Activated CD4-positive, alpha-beta T cell treated with anti-CD3 and anti-CD28 coated beads, Interleukin-2, amount 10 ng/mL, durations not matched to agents 24 days and 14 days (primary cell): ENCODE measurements at regions of chr16 and their contacts with region 1.

Region 1: DNA sequence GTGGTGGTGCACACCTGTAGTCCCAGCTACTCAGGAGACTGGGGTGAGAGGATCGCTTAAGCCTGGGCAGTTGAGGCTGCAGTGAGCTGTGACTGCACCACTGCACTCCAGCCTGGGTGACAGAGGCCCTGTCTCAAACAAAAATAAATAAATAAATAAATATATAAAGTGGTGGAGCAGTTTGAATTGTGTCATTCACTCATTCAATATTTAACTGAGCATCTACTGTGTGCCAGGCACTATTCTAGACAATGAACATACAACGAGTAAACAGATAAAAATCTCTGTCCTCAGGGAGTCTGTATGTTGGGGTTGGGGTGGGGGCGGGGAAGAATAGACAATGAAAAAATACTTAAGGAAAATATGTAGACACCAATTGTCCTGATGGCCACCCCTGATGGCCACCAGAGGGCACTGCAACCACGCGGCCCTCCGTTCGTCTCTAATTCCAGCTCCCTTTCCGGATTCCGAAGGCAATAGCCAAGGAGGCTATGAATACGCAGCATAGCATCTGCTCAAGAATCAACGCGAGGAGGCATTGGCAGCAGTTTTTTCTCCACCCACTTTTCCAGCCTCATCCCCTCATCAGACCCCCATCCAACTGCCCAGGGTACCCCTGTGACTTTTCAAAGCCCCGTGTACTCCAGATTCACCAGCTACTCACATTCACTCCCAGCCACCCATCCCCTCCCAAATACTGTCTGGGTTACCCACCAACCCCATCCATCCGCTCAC is 21.4 kb downstream of the QPRT start:
- DNase-seq: peak; percentile 92
- H3K4me3 Mint-ChIP-seq: peak overlapping the region; percentile 47
- H3K27ac Mint-ChIP-seq: peak overlapping the region; percentile 81
- H3K4me1 Mint-ChIP-seq: peaks cover 35% of the 10 kb centered on the region
- H3K27me3 Mint-ChIP-seq: no peaks in the 10 kb centered on the region

Region 2: DNA sequence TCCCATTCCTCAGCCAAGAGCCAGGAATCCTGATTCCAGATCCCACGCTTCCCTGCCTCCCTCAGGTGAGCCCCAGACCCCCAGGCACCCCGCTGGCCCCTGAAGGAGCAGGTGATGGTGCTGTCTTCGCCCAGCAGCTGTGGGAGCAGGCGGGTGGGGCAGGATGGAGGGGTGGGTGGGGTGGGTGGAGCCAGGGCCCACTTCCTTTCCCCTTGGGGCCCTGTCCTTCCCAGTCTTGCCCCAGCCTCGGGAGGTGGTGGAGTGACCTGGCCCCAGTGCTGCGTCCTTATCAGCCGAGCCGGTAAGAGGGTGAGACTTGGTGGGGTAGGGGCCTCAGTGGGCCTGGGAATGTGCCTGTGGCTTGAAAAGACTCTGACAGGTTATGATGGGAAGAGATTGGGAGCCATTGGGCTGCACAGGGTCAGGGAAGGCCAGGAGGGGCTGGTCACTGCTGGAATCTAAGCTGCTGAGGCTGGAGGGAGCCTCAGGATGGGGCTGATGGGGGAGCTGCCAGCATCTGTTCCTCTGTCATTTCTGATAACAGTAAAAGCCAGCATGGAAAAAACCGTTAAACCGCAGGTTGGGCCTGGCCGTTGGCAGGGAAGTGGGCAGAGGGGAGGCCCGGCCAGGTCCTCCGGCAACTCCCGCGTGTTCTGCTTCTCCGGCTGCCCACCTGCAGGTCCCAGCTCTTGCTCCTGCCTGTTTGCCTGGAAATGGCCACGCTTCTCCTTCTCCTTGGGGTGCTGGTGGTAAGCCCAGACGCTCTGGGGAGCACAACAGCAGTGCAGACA is 37.2 kb before region 1 on chr16 and contains the start of gene SPN:
- intact Hi-C with region 1: loop called (anchors 2 kb)
- DNase-seq: peak; percentile 86
- H3K4me3 Mint-ChIP-seq: peak within 1 kb of the TSS; percentile 97
- H3K27ac Mint-ChIP-seq: peak within 1 kb of the TSS; percentile 94
- H3K4me1 Mint-ChIP-seq: peaks cover 52% of the 10 kb centered on the region
- H3K27me3 Mint-ChIP-seq: no peaks in the 10 kb centered on the region
- total RNA-seq, gene SPN: 157 and 165 TPM in 2 replicates

Region 3: GRCh38 chr16:29720699-29721098 is 20.3 kb after region 1 on chr16:
- intact Hi-C with region 1: loop called (anchors 2 kb)
- DNase-seq: no peak
- H3K4me3 Mint-ChIP-seq: no peak overlapping the region
- H3K27ac Mint-ChIP-seq: no peak overlapping the region
- H3K4me1 Mint-ChIP-seq: peaks cover 17% of the 10 kb centered on the region
- H3K27me3 Mint-ChIP-seq: peaks cover 3% of the 10 kb centered on the region

Region 4: DNA sequence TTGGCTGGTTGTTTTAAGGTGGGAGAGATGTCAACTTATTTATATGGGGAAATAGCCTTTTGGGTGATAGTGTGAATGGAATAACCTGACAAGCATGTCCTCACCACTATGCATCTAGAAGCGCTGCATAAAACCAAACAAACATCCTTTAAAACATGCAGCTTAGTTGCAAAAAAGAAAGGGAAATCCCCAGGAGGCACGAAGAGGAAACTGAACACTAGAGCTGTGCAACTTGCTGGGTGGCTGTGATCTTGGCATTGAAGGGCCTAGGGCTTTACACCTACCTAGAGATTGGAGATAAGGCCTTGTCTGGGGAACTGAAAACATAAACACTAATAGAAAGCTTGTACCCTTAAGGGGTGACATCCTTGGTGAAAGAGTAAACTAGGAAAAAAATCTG is 38.1 kb after region 1 on chr16:
- intact Hi-C with region 1: loop called (anchors 2 kb)
- DNase-seq: peak; percentile 91
- H3K4me3 Mint-ChIP-seq: peak overlapping the region; percentile 42
- H3K27ac Mint-ChIP-seq: peak overlapping the region; percentile 80
- H3K4me1 Mint-ChIP-seq: peaks cover 57% of the 10 kb centered on the region
- H3K27me3 Mint-ChIP-seq: peaks cover 4% of the 10 kb centered on the region

Region 5: DNA sequence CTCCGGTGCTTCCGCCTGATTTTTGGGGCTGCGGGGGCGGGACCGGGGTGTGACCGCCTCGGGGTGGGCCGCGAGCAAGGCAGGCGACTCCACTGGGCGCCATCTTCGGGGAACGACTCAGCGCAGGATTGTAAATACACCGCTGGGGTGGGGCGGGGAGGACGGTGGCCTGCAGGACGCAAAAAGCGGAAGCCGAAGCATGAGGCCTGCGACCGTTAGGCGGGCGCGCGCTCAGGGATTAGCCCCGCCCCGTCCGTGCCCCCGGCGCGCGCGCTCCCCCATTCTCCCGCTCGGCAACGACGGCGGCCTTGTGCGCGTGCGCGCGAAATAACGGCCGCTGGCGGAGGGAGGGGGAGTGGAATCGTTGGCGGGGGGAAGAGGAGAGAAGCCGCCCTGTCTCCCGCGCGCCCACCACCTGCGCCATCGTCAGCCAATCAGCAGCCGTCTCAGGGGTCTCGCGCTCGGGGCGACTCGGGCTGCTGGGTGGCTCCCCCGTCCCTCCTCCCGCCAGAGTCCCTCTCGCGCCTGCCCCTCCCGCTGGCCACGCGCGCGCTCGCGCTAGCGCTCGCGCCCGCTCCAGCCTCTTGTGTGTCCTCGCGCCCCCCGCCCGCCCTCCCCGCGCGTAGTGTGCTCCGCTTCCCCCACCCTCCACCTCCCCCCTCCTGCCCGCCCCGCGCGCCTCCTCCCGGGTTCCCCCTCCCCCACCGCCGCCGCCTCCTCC is 105.1 kb after region 1 on chr16:
- intact Hi-C with region 1: loop called (anchors 5 kb)
- DNase-seq: peak; percentile 99
- H3K4me3 Mint-ChIP-seq: peak overlapping the region; percentile 96
- H3K27ac Mint-ChIP-seq: peak overlapping the region; percentile 99
- H3K4me1 Mint-ChIP-seq: peaks cover 42% of the 10 kb centered on the region
- H3K27me3 Mint-ChIP-seq: no peaks in the 10 kb centered on the region

Region 6: DNA sequence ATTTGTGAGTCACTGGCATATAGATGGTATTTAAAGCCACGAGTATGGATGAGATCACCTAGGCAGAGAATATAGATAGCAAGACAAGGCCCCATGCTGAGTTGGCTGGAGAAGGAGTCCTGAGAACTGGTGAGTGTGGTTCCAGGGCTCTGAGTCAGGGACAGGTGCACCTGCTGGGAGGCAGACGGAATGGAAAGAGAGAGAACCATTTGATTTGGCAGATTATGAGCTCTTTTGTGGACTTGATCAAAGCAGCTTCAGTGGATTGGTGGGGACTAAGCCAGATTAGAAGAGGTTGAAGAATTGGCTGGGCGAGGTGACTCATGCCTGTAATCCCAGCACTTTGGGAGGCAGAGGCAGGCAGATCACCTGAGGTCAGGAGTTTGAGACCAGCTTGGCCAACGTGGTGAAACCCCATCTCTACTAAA is 318.3 kb after region 1 on chr16:
- intact Hi-C with region 1: loop called (anchors 2 kb)
- DNase-seq: no peak
- H3K4me3 Mint-ChIP-seq: no peak overlapping the region
- H3K27ac Mint-ChIP-seq: no peak overlapping the region
- H3K4me1 Mint-ChIP-seq: peaks cover 6% of the 10 kb centered on the region
- H3K27me3 Mint-ChIP-seq: peaks cover 23% of the 10 kb centered on the region